ENCODE measurements at regions of chr4 and their contacts with region 1.

Region 1: GRCh38 chr4:86927843-86928395 is 6.9 kb upstream of the AFF1 start:
- DNase-seq: no peak
- H3K4me3 ChIP-seq: no peak overlapping the region
- H3K27ac ChIP-seq: peak overlapping the region; percentile 5
- H3K4me1 ChIP-seq: peaks cover 48% of the 10 kb centered on the region
- CTCF ChIP-seq: no peak

Region 2: DNA sequence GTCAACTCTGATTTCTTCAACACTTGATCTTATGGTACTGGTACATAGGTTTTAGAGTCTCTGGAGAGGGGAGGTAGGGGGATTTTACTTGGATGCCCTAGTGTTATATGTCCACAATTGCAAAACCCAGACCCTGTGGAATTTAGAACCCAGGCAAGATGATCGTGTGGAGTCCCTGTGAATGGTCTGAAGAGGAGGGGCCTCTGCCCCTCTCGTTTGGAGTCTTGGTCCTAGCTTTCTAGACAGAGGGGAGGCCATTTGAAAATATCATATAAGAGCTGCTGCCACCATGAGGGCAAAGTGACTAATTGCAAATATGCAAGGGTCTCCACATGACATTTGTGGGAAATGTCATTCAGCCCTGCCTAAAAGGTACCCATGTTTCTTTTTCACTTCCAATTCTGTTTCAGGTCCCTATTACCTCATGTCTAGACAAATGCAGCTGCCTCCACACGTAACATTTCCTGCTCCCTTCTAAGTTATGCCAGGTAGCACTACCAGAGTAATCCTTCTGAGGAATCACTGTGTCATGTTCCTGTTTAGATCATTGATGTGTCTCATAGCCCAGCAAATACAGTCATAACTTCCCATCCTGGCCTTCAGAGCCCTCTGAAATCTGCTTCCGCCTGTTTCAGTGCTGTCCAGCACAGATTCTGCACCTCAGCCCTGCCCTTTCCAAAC is 165.7 kb after region 1 on chr4:
- CTCF ChIA-PET with region 1: interaction called, 22 read pairs
- POLR2A ChIA-PET with region 1: interaction called, 10 read pairs
- intact Hi-C with region 1: no loop called
- DNase-seq: peak; percentile 80
- H3K4me3 ChIP-seq: no peak overlapping the region
- H3K27ac ChIP-seq: no peak overlapping the region
- H3K4me1 ChIP-seq: peaks cover 22% of the 10 kb centered on the region
- CTCF ChIP-seq: peak; percentile 88

Region 3: GRCh38 chr4:87220094-87220822 is 292.3 kb after region 1 on chr4 and contains the start of gene KLHL8:
- CTCF ChIA-PET with region 1: no interaction called
- POLR2A ChIA-PET with region 1: interaction called, 3 read pairs
- intact Hi-C with region 1: loop called (anchors 5 kb)
- DNase-seq: peak; percentile 90
- H3K4me3 ChIP-seq: peak within 1 kb of the TSS; percentile 95
- H3K27ac ChIP-seq: peak within 1 kb of the TSS; percentile 77
- H3K4me1 ChIP-seq: peaks cover 26% of the 10 kb centered on the region
- CTCF ChIP-seq: peak; percentile 35
- total RNA-seq, gene KLHL8: 9.0 and 12.6 TPM in 2 replicates